Activated CD4-positive, alpha-beta memory T cell treated with anti-CD3 and anti-CD28 coated beads for 36 hours (primary cell): ENCODE measurements at regions of chr3 and their contacts with region 1.

Region 1: GRCh38 chr3:138946181-138947059 is 517 bp downstream of the FOXL2 start:
- DNase-seq: peak; percentile 46
- H3K4me3 Mint-ChIP-seq: peak overlapping the region; percentile 60
- H3K27ac Mint-ChIP-seq: no peak overlapping the region
- H3K4me1 Mint-ChIP-seq: peaks cover 40% of the 10 kb centered on the region
- H3K27me3 Mint-ChIP-seq: peaks cover 78% of the 10 kb centered on the region

Region 2: DNA sequence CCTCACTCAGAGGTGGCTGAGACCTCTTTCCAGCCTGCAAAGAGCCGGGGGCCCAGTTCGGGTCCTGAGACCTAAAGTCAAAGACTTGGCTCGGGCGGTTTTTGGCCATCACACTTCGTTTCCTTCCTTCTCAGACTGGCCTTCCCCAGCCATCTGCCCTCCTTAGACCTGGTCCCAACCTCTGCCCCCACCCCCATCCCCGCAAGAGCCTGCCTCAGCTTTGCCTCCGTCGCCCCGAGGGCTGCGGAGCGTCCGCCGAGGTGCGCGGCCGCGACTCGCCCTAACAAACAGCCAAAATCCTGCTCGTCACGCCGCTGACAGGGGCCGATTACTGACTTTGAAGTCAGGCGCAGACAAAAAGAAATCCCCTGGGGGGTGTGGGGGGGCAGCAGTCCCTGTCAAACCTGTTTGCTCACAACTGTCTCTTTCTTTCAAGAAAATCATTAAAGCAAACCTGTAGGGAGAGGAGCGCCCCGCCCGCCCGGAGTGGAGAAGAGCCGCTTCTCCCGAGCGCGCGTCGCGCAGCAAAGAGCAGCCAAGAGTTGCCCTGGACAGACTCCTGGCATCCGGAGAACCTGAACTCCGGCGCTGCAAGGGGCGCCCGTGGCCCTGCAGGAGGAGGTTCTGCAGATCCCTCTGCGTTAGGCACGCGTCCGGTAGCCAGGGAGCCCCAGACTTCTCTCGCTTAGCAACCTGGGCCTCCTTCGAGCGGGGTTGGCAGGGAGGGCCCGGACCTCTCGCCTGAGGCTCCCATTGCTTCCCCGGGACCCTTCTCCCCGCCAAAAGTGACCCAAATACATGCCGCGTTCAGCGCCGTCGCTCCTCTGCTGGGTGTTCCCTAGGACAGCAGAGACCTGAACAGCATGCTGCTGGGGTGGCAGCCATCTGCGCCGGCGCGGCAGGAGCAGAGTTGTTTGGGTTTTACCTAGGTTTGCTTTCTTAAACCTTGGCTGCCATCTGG is 1177.8 kb before region 1 on chr3:
- CTCF ChIA-PET with region 1: no interaction called
- POLR2A ChIA-PET with region 1: no interaction called
- intact Hi-C with region 1: loop called (anchors 5 kb)
- DNase-seq: no peak
- H3K4me3 Mint-ChIP-seq: no peak overlapping the region
- H3K27ac Mint-ChIP-seq: no peak overlapping the region
- H3K4me1 Mint-ChIP-seq: peaks cover 12% of the 10 kb centered on the region
- H3K27me3 Mint-ChIP-seq: peaks cover 79% of the 10 kb centered on the region

Region 3: DNA sequence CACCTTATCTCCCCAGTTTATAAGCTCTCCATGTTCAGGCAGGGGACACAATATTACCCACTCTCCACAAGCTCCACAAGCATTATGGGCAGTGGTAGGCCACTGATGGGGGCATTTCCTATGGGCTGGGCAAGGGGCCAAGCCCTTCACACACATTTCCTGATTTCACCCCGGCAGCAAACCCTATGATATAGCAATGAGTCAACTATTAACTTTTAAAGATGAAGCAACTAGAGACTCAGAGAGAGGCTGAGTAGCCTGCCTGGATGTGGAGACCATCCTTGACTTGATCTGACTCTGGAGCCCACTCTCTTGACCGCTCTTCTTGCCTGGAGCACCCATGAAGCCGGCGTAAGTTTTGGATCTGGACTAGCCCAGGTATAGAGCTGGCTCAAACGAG is 28.0 kb after region 1 on chr3:
- CTCF ChIA-PET with region 1: interaction called, 10 read pairs
- POLR2A ChIA-PET with region 1: no interaction called
- intact Hi-C with region 1: no loop called
- DNase-seq: no peak
- H3K4me3 Mint-ChIP-seq: no peak overlapping the region
- H3K27ac Mint-ChIP-seq: no peak overlapping the region
- H3K4me1 Mint-ChIP-seq: no peaks in the 10 kb centered on the region
- H3K27me3 Mint-ChIP-seq: peaks cover 21% of the 10 kb centered on the region